BJ (cell line): ENCODE measurements at regions of chr9 and their contacts with region 1.

Region 1: GRCh38 chr9:107425101-107426045 is 64.2 kb downstream of the KLF4 start:
- DNase-seq: no peak
- H3K4me3 ChIP-seq: no peak overlapping the region
- H3K27me3 ChIP-seq: no peaks in the 10 kb centered on the region
- CTCF ChIP-seq: peak; percentile 97

Region 2: DNA sequence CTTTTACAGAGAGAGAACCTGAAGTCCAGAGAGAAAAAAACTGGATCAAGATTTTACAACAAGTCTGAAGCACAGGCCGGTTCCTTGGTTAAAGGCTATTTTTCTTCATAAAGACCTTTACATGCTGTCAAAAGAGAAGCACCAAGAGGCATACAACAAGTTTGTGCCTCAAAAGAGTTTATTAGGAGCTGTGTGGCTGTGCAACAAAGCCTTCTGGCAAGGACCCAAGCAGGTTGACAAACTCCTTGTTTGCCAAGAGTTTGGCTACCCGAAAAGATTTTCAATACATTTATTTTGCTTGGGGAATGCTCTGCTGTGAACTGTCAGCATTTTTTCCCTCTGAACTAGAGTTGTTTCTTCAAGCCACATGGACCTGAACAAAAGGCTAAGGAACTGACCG is 345.2 kb before region 1 on chr9:
- CTCF ChIA-PET with region 1: no interaction called
- POLR2A ChIA-PET with region 1: no interaction called
- DNase-seq: no peak
- H3K4me3 ChIP-seq: no peak overlapping the region
- H3K27me3 ChIP-seq: no peaks in the 10 kb centered on the region
- CTCF ChIP-seq: no peak

Region 3: GRCh38 chr9:107404161-107404560 is 21.2 kb before region 1 on chr9:
- CTCF ChIA-PET with region 1: interaction called, 10 read pairs
- POLR2A ChIA-PET with region 1: no interaction called
- DNase-seq: no peak
- H3K4me3 ChIP-seq: no peak overlapping the region
- H3K27me3 ChIP-seq: no peaks in the 10 kb centered on the region; the same call in 1 of the 2 replicates
- CTCF ChIP-seq: no peak

Region 4: DNA sequence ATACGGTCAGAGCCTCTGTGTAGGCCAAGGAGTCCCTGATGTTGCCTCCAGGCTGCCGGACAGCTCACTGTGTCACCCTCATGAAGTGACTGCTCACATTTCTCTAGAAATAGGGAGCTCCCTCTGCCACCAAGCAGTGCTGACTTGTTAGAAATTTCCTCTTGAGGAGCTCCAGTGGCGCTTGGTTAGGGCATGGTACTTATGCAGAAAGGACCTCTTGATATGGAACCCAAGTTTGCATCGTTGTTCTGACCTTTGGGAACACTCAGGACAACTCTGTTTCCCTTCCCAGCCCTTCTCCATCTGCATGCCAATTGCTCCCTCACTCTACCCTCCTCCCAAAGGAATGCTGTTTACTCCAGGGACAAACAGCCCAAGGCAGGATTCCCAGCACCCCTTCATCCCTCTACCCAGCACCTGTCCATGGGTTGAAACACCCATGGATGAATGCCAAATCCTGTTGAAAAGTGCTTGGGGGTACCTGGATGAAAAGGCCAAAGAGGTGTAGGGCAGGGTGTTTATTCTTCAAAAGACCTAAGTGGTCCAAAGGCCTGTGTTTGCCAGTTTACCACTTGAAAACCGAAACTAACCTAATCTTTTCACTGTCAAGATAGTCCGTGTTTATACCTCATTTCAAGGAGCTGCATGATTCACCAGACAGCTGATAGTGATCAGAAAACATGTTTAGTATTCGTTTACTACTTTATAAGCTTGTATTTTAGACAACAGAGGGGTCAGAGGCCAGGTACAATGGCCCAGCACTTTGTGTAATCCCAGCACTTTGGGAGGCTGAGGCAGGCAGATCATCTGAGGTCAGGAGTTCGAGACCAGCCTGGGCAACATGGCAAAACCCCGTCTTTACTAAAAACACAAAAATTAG is 13.1 kb after region 1 on chr9:
- CTCF ChIA-PET with region 1: interaction called, 29 read pairs
- POLR2A ChIA-PET with region 1: no interaction called
- DNase-seq: no peak
- H3K4me3 ChIP-seq: no peak overlapping the region
- H3K27me3 ChIP-seq: 0 out of 2 replicates have a peak, but pooled peaks cover 2% of the 10 kb centered on the region
- CTCF ChIP-seq: no peak

Region 5: GRCh38 chr9:107443786-107444185 is 18.4 kb after region 1 on chr9:
- CTCF ChIA-PET with region 1: interaction called, 29 read pairs
- POLR2A ChIA-PET with region 1: no interaction called
- DNase-seq: no peak
- H3K4me3 ChIP-seq: no peak overlapping the region
- H3K27me3 ChIP-seq: 0 out of 2 replicates have a peak, but pooled peaks cover 2% of the 10 kb centered on the region
- CTCF ChIP-seq: no peak

Region 6: GRCh38 chr9:107465467-107466451 is 40.4 kb after region 1 on chr9:
- CTCF ChIA-PET with region 1: interaction called, 15 read pairs
- POLR2A ChIA-PET with region 1: no interaction called
- DNase-seq: no peak
- H3K4me3 ChIP-seq: peak overlapping the region; percentile 65
- H3K27me3 ChIP-seq: no peaks in the 10 kb centered on the region
- CTCF ChIP-seq: peak; percentile 69

Region 7: GRCh38 chr9:108565651-108566378 is 1140.4 kb after region 1 on chr9:
- CTCF ChIA-PET with region 1: interaction called, 16 read pairs
- POLR2A ChIA-PET with region 1: no interaction called
- DNase-seq: peak; percentile 39
- H3K4me3 ChIP-seq: no peak overlapping the region
- H3K27me3 ChIP-seq: no peaks in the 10 kb centered on the region; the same call in 1 of the 2 replicates
- CTCF ChIP-seq: peak; percentile 84

Region 8: DNA sequence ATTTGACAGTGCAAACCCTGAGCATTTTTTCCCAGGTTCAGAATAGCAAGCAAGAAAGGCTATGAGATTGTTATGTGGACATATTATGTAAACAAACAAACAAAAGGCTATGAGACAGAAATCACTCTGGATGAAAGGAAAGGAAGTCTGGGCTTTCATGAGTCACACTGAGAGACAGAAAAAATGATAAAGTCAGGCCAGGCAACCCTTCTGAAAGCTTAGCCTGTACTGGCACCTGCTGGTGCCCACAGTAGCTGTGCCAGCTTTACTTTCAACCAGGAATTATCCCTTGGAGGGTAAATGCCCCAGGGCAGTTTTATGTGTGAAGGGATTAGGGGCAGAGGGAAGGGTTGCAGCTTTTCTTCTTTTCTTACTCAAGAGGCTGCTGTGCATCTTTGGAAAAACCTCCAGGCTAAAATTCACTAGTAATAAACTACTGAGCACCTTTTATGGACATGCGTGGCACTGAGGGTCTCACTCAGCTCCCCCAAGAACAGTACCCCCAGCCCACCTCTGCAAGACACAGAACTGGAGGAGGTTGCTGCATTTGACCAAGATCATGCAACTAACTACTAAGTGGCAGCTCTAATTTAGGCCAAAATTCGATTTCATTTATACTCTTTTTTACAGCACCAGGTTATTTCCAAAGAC is 1388.7 kb after region 1 on chr9:
- CTCF ChIA-PET with region 1: interaction called, 10 read pairs
- POLR2A ChIA-PET with region 1: no interaction called
- DNase-seq: no peak
- H3K4me3 ChIP-seq: no peak overlapping the region
- H3K27me3 ChIP-seq: no peaks in the 10 kb centered on the region; the same call in 1 of the 2 replicates
- CTCF ChIP-seq: peak; percentile 52